Psoas muscle (tissue), 8 donors: ENCODE measurements at regions of chr12 and their contacts with region 1.

Region 1: DNA sequence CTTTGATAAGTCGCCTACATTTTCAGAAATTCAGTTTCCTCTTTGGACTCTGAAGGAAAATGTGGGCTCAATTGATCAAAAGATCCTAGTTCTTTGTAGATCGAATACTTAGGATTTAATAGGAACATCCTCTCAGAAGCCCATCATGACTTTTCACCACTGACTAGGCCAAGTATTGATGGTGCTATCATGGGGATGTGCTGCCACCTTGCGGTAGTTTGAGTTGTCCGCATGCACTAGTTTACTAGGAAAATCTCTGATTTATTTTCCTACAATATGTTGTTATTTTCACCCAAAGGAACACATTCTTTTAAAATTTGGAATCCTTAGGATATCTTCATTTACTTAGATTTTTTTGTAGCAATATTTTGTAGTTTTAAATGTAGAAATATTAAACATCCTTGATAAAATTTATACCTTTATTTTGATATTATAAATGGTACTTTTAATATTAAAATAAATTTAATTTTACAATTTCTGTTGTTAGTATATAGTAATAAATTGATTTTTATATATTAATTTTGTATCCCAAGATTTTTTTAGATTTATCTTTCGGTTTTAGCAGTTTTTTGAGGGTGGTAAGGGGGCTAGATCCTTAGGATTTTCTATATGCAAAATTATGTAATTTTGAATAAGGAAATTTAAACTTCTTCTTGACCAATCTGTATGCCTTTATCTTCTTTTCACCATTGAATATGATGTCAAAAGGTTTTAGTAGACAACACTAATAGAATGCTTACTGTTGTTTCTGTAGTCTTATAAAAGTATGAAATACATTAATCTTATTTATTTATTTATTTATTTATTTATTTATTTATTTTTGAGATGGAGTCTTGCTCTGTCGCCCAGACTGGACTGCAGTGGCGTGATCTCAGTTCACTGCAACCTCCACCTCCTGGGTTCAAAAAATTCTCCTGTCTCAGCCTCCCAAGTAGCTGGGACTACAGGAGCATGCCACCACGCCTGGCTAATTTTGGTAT is 52.9 kb upstream of the OR9K2 start:
- DNase-seq: peak; percentile 60 to 77
- ATAC-seq: peak; percentile 56 to 90 (median 72)
- H3K4me3 ChIP-seq: no peak overlapping the region
- H3K27ac ChIP-seq: no peak overlapping the region
- H3K4me1 ChIP-seq: no peaks in the 10 kb centered on the region
- H3K27me3 ChIP-seq: no peaks in the 10 kb centered on the region
- CTCF ChIP-seq: peak; percentile 86

Region 2: DNA sequence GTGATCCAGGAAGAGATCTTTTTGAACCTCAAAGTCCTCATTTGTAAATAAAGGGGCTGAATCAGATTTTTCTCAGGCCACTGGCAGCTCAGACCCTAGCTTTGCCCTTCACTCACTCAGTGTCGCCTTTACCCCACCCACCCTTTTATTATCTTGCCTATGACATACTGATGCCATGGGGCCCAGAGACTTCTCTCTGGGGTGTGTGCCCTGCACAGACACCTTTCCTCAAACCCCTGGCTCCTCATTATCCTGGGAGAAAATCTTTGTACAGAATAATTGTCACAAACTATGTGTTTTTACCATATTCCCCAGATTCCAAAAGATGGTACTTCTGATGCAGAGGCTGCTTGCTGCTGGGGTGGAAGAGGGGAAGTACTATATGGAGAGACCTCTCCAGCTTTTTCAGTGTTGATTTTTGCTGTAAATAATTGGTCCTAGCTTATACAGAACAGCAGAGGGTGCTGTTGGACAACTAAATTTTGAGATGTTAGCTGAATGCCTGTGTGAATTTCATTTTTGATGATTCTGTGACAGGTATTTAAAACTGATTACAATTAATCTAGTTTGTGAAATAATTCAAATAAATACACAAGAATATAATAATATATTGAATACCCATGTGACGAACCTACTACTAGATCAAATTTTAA is 371.3 kb before region 1 on chr12:
- intact Hi-C with region 1: loop called in 1 of 2 experiments (anchors 10 kb)
- DNase-seq: no peak
- ATAC-seq: peak in 1 of 4 donors; percentile 54
- H3K4me3 ChIP-seq: no peak overlapping the region
- H3K27ac ChIP-seq: no peak overlapping the region
- H3K4me1 ChIP-seq: no peaks in the 10 kb centered on the region
- H3K27me3 ChIP-seq: no peaks in the 10 kb centered on the region
- CTCF ChIP-seq: peak; percentile 58

Region 3: DNA sequence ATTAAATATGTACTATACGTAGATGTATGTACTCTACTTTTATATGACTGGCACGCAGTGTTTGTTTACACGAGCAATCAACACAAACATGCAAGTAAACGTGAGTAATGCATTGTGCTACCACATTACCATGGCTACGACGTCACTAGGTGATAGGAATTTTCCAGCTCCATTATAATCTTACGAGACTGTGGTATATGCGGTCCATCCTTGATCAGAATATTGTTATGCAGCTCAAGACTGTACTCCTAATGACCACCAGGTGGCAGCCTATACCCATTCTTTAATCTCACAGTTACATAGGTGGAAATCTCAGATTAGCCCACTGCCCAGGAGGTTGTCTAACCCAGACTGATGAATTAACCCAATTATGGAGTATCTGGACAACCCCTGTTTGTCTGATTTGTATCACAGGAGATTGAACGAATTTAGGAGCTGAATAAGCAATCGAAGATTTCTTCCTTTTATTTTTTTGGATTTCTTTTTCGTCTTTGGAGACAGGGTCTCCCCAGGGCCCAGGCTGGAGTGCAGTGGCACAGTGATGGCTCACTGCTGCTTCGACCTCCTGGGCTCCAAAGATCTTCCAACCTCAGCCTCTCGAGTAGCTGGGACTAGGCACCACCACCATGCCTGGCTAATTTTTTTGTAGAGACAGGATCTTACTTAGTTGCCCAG is 80.0 kb before region 1 on chr12:
- intact Hi-C with region 1: loop called (anchors 1 to 2 kb)
- DNase-seq: no peak
- ATAC-seq: peak; percentile 68 to 82 (median 72)
- H3K4me3 ChIP-seq: no peak overlapping the region
- H3K27ac ChIP-seq: no peak overlapping the region
- H3K4me1 ChIP-seq: no peaks in the 10 kb centered on the region
- H3K27me3 ChIP-seq: no peaks in the 10 kb centered on the region
- CTCF ChIP-seq: peak; percentile 91

Region 4: DNA sequence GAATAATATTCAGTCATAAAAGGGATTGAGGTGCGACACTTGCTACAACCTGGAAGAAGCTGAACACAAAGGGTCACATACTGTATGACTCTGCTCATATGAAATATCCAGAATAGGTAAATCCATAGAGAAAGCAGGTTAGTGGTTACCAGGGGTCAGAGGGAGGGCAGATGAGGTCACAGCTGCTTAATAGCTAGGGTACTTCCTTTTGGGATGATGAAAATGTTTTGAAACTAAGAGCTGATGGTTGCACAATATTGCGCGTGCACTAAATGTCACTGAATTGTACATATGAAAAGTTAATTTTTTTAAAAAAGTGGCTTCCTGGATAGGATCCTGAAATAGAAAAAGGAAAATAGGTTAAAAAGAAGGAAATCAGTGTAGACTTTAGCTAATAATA is 29.8 kb before region 1 on chr12:
- intact Hi-C with region 1: no loop called
- DNase-seq: no peak
- ATAC-seq: no peak
- H3K4me3 ChIP-seq: no peak overlapping the region
- H3K27ac ChIP-seq: no peak overlapping the region
- H3K4me1 ChIP-seq: no peaks in the 10 kb centered on the region
- H3K27me3 ChIP-seq: peaks cover 0 to 2% (median 0%) of the 10 kb centered on the region in 3 donors
- CTCF ChIP-seq: no peak